IMR-90 (cell line): ENCODE measurements at regions of chr21 and their contacts with region 1.

Region 1: GRCh38 chr21:45554477-45555175 is 12.4 kb upstream of the SLC19A1 start:
- DNase-seq: peak; percentile 48
- ATAC-seq: peak; percentile 83
- H3K4me3 ChIP-seq: peak overlapping the region; percentile 84
- H3K27ac ChIP-seq: peak overlapping the region; percentile 56
- H3K4me1 ChIP-seq: peaks cover 2% of the 10 kb centered on the region; the same call in 1 of the 2 replicates
- H3K27me3 ChIP-seq: no peaks in the 10 kb centered on the region
- CTCF ChIP-seq: peak; percentile 78
- POLR2A ChIP-seq: peak; percentile 32; the same call in 1 of the 2 replicates
- RAD21 ChIP-seq: peak; percentile 60

Region 2: DNA sequence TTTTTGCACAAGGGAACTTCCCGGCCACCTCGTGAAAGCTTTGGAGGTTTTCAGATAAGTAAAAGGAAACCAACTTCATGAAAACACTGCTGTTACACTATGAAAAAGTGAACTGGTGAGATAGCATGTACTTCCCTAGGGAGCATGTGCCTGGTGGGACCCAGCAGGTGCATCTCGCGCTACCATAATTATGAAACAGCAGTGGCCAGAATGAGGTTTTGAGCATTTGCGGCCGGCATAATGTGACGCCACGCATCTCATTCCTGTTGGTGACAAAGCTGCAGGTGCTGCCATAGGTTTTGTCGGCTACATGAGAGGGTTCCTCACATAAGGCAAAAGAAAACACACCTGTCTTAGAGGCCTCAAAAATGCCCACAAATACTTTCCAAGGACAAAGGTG is 997.7 kb before region 1 on chr21:
- CTCF ChIA-PET with region 1: no interaction called
- POLR2A ChIA-PET with region 1: no interaction called
- dilution Hi-C with region 1: no loop called
- in situ Hi-C with region 1: no loop called
- intact Hi-C with region 1: no loop called
- DNase-seq: no peak
- ATAC-seq: no peak
- H3K4me3 ChIP-seq: no peak overlapping the region
- H3K27ac ChIP-seq: no peak overlapping the region
- H3K4me1 ChIP-seq: no peaks in the 10 kb centered on the region
- H3K27me3 ChIP-seq: peaks cover 17% of the 10 kb centered on the region
- CTCF ChIP-seq: no peak
- POLR2A ChIP-seq: no peak
- RAD21 ChIP-seq: no peak

Region 3: DNA sequence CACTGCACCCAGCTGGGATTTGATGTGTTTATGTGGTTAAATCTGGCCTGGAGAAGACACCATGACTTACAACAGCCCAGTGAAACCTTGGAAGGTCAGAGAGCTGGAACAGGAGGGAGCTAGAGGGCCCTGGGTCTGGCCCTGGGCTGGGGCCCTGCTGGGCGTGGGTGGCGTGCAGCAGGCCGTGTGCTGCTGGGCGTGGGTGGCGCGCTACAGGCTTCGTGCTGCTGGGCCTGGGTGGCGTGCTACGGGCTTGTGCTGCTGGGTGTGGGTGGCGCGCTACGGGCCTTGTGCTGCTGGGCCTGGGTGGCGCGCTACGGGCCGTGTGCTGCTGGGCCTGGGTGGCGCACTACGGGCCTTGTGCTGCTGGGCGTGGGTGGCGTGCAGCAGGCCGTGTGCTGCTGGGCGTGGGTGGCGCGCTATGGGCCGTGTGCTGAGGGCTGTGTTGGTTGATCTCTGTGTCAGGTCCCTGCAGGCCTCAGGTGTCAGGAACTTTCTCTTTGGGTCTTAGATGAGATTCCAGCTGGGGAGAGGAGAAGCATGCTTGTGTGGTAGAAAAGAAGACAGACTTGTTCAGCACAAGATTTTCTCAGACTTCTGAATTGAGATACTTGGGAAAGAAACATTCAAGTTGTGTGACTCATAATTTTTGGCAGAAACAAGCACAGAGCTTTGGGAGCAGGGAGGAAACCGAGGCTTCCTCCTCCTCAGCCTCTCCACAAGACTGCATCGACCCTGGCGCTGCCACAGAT is 83.7 kb before region 1 on chr21:
- CTCF ChIA-PET with region 1: no interaction called
- POLR2A ChIA-PET with region 1: no interaction called
- dilution Hi-C with region 1: no loop called
- in situ Hi-C with region 1: no loop called
- intact Hi-C with region 1: no loop called
- DNase-seq: peak; percentile 93
- ATAC-seq: peak; percentile 71
- H3K4me3 ChIP-seq: no peak overlapping the region
- H3K27ac ChIP-seq: peak overlapping the region; percentile 73
- H3K4me1 ChIP-seq: peaks cover 32% of the 10 kb centered on the region
- H3K27me3 ChIP-seq: no peaks in the 10 kb centered on the region
- CTCF ChIP-seq: no peak
- POLR2A ChIP-seq: no peak
- RAD21 ChIP-seq: no peak

Region 4: GRCh38 chr21:45596704-45597318 is 42.2 kb after region 1 on chr21:
- CTCF ChIA-PET with region 1: interaction called, 15 read pairs
- POLR2A ChIA-PET with region 1: no interaction called
- dilution Hi-C with region 1: no loop called
- in situ Hi-C with region 1: no loop called
- intact Hi-C with region 1: loop called (anchors 1 kb)
- DNase-seq: peak; percentile 28
- ATAC-seq: peak; percentile 90
- H3K4me3 ChIP-seq: no peak overlapping the region
- H3K27ac ChIP-seq: no peak overlapping the region
- H3K4me1 ChIP-seq: no peaks in the 10 kb centered on the region
- H3K27me3 ChIP-seq: peaks cover 51% of the 10 kb centered on the region
- CTCF ChIP-seq: peak; percentile 82
- POLR2A ChIP-seq: no peak
- RAD21 ChIP-seq: peak; percentile 70

Region 5: DNA sequence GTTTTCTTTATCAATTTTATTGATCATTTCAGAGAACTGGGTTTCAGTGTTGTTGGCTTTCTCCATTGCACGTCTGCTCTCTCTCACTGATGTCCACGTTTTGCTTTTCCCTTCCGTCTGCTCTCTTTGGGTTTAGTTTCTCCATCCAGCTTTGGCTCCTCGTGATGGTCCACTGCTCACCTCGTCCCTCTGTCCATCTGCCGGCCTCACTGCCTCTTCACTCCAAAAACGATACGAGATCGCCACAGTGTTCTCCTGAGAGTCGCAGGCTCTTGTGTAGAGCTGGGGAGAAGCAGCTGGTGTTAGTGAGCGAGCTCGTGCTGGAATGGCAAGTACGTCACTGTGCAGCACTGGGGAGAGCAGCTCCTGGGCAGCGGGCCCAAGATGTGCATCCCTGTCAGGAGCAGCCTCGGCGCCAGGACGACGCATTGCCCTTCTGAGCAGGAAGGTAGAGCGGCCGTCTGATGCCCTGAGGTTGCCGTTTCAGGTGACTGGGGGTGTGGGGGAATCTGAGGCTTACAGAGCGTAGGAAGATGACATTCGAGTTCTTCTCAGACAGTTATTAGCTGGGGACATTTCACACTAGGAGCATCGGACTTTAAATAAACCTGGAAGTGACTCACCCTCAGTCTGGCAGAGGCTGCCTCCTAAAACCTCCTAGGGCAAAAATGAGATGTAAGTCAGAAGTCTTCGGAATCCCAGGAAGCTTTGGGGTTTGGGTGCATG is 57.5 kb after region 1 on chr21:
- CTCF ChIA-PET with region 1: interaction called, 3 read pairs
- POLR2A ChIA-PET with region 1: no interaction called
- dilution Hi-C with region 1: no loop called
- in situ Hi-C with region 1: no loop called
- intact Hi-C with region 1: loop called (anchors 5 kb)
- DNase-seq: peak; percentile 90
- ATAC-seq: peak; percentile 98
- H3K4me3 ChIP-seq: no peak overlapping the region; the same call in 1 of the 2 replicates
- H3K27ac ChIP-seq: no peak overlapping the region
- H3K4me1 ChIP-seq: peaks cover 6% of the 10 kb centered on the region
- H3K27me3 ChIP-seq: peaks cover 45% of the 10 kb centered on the region
- CTCF ChIP-seq: no peak
- POLR2A ChIP-seq: no peak
- RAD21 ChIP-seq: no peak

Region 6: DNA sequence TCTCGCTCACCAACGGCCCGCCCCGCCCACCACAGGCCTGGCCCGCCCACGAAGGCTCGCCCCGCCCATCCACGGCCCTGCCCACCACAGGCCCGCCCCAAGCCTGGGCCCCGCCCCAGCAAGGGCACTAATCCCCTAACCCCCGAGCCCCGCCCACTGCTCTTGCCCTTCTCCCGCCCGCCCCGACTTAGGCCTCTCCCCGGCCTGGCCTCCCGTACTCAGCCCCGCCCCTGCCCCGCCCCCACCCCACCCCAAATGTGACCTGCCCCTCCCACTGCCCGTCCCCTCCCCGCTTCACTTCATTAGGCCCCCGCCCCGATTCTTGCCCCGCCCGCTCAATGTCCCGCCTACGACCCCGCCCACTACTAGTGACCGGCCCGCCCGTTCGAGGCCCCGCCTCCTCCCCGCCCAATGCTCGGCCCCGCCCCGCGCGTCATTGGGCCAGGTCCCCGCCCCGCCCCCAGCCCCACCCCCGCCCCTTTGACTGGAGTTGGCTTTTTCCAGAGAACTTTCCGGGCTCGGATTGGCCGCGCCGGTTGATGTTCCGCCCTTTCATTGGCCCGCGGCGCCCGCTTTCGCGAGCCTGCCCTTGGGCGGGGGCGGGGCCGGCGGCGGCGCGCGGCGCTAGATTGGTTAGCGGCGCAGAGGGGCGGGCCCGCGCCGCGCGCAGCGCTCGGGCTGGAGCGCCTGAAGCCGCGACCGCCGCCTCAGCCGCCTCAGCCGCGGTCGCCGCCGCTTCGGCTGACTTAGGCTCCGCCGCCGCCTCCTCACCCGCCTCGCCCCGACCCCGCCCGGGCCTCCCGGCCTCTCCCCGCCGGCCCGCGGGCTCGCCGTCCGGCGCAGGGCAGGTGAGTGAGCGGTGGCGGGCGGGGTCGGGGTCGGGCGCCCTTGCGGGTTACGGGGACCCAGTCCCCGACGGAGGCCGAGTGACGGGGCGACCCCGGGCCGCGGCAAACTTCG is 88.7 kb after region 1 on chr21 and contains the start of gene PCBP3:
- CTCF ChIA-PET with region 1: no interaction called
- POLR2A ChIA-PET with region 1: no interaction called
- dilution Hi-C with region 1: no loop called
- in situ Hi-C with region 1: no loop called
- intact Hi-C with region 1: loop called (anchors 5 kb)
- DNase-seq: peak; percentile 89
- ATAC-seq: peak; percentile 86
- H3K4me3 ChIP-seq: peak within 1 kb of the TSS; percentile 72
- H3K27ac ChIP-seq: no peak within 1 kb of the TSS; the same call in 1 of the 2 replicates
- H3K4me1 ChIP-seq: no peaks in the 10 kb centered on the region
- H3K27me3 ChIP-seq: peaks cover 7% of the 10 kb centered on the region; the same call in 1 of the 2 replicates
- CTCF ChIP-seq: no peak
- POLR2A ChIP-seq: peak; percentile 86
- RAD21 ChIP-seq: no peak
- total RNA-seq, gene PCBP3: 2.5 and 2.9 TPM in 2 replicates

Region 7: GRCh38 chr21:45670731-45671130 is 116.1 kb after region 1 on chr21:
- CTCF ChIA-PET with region 1: no interaction called
- POLR2A ChIA-PET with region 1: no interaction called
- dilution Hi-C with region 1: no loop called
- in situ Hi-C with region 1: no loop called
- intact Hi-C with region 1: no loop called
- DNase-seq: no peak
- ATAC-seq: no peak
- H3K4me3 ChIP-seq: no peak overlapping the region
- H3K27ac ChIP-seq: no peak overlapping the region
- H3K4me1 ChIP-seq: no peaks in the 10 kb centered on the region
- H3K27me3 ChIP-seq: no peaks in the 10 kb centered on the region
- CTCF ChIP-seq: no peak
- POLR2A ChIP-seq: no peak
- RAD21 ChIP-seq: no peak